Caco-2 (cell line): ENCODE measurements at regions of chr11 and their contacts with region 1.

Region 1: GRCh38 chr11:119666463-119667131 is 62.4 kb downstream of the NECTIN1 start:
- DNase-seq: peak; percentile 86 to 94
- H3K4me3 ChIP-seq: no peak overlapping the region
- H3K4me3 Mint-ChIP-seq: no peak overlapping the region
- H3K27ac Mint-ChIP-seq: no peak overlapping the region
- H3K4me1 ChIP-seq: peaks cover 6% of the 10 kb centered on the region; the same call in 1 of the 2 replicates
- H3K4me1 Mint-ChIP-seq: peaks cover 7% of the 10 kb centered on the region
- H3K27me3 ChIP-seq: no peaks in the 10 kb centered on the region
- H3K27me3 Mint-ChIP-seq: no peaks in the 10 kb centered on the region
- CTCF ChIP-seq: peak; percentile 99

Region 2: GRCh38 chr11:119481021-119481666 is 185.5 kb before region 1 on chr11:
- CTCF ChIA-PET with region 1: no interaction called
- POLR2A ChIA-PET with region 1: no interaction called
- intact Hi-C with region 1: loop called (anchors 1 kb)
- DNase-seq: peak; percentile 93 to 99
- H3K4me3 ChIP-seq: no peak overlapping the region
- H3K4me3 Mint-ChIP-seq: no peak overlapping the region
- H3K27ac Mint-ChIP-seq: peak overlapping the region; percentile 16
- H3K4me1 ChIP-seq: peaks cover 5% of the 10 kb centered on the region; the same call in 1 of the 2 replicates
- H3K4me1 Mint-ChIP-seq: peaks cover 8% of the 10 kb centered on the region
- H3K27me3 ChIP-seq: no peaks in the 10 kb centered on the region; the same call in 1 of the 2 replicates
- H3K27me3 Mint-ChIP-seq: peaks cover 13% of the 10 kb centered on the region
- CTCF ChIP-seq: peak; percentile 99 to 100

Region 3: GRCh38 chr11:119791701-119792151 is 125.1 kb after region 1 on chr11:
- CTCF ChIA-PET with region 1: no interaction called
- POLR2A ChIA-PET with region 1: no interaction called
- intact Hi-C with region 1: loop called (anchors 10 kb)
- DNase-seq: peak in 1 of 2 experiments; percentile 33
- H3K4me3 ChIP-seq: no peak overlapping the region
- H3K4me3 Mint-ChIP-seq: no peak overlapping the region
- H3K27ac Mint-ChIP-seq: no peak overlapping the region
- H3K4me1 ChIP-seq: no peaks in the 10 kb centered on the region
- H3K4me1 Mint-ChIP-seq: peaks cover 1% of the 10 kb centered on the region
- H3K27me3 ChIP-seq: no peaks in the 10 kb centered on the region
- H3K27me3 Mint-ChIP-seq: no peaks in the 10 kb centered on the region
- CTCF ChIP-seq: no peak

Region 4: GRCh38 chr11:119999220-119999619 is 332.6 kb after region 1 on chr11:
- CTCF ChIA-PET with region 1: no interaction called
- POLR2A ChIA-PET with region 1: no interaction called
- intact Hi-C with region 1: loop called (anchors 1 kb)
- DNase-seq: peak in 1 of 2 experiments; percentile 52
- H3K4me3 ChIP-seq: no peak overlapping the region
- H3K4me3 Mint-ChIP-seq: no peak overlapping the region
- H3K27ac Mint-ChIP-seq: no peak overlapping the region
- H3K4me1 ChIP-seq: no peaks in the 10 kb centered on the region
- H3K4me1 Mint-ChIP-seq: no peaks in the 10 kb centered on the region
- H3K27me3 ChIP-seq: no peaks in the 10 kb centered on the region
- H3K27me3 Mint-ChIP-seq: peaks cover 9% of the 10 kb centered on the region
- CTCF ChIP-seq: peak; percentile 46 to 68

Region 5: GRCh38 chr11:120108154-120108865 is 441.7 kb after region 1 on chr11:
- CTCF ChIA-PET with region 1: interaction called, 3 read pairs
- POLR2A ChIA-PET with region 1: no interaction called
- intact Hi-C with region 1: loop called (anchors 1 kb)
- DNase-seq: peak; percentile 78 to 91
- H3K4me3 ChIP-seq: no peak overlapping the region
- H3K4me3 Mint-ChIP-seq: no peak overlapping the region
- H3K27ac Mint-ChIP-seq: no peak overlapping the region
- H3K4me1 ChIP-seq: peaks cover 4% of the 10 kb centered on the region; the same call in 1 of the 2 replicates
- H3K4me1 Mint-ChIP-seq: no peaks in the 10 kb centered on the region
- H3K27me3 ChIP-seq: no peaks in the 10 kb centered on the region
- H3K27me3 Mint-ChIP-seq: peaks cover 17% of the 10 kb centered on the region
- CTCF ChIP-seq: peak; percentile 100